Motor neuron (in vitro differentiated cells): ENCODE measurements at regions of chr6 and their contacts with region 1.

Region 1: GRCh38 chr6:88982720-88983119 is 19.3 kb upstream of the RNGTT start:
- ATAC-seq: peak; percentile 59 to 97 (median 82)
- H3K4me3 ChIP-seq: no peak overlapping the region
- H3K27ac ChIP-seq: no peak overlapping the region
- H3K4me1 ChIP-seq: no peaks in the 10 kb centered on the region

Region 2: GRCh38 chr6:89080542-89081422 is 98.1 kb after region 1 on chr6 and contains the start of gene PNRC1:
- in situ Hi-C with region 1: loop called in 3 of 9 experiments (anchors 10 to 25 kb)
- ATAC-seq: peak; percentile 58 to 83 (median 76)
- H3K4me3 ChIP-seq: peak within 1 kb of the TSS; percentile 67 to 92 (median 81)
- H3K27ac ChIP-seq: peak within 1 kb of the TSS; percentile 79 to 90
- H3K4me1 ChIP-seq: peaks cover 8 to 12% of the 10 kb centered on the region in 2 donors
- total RNA-seq, gene PNRC1: 39.4 to 201 (median 62.8) TPM

Region 3: DNA sequence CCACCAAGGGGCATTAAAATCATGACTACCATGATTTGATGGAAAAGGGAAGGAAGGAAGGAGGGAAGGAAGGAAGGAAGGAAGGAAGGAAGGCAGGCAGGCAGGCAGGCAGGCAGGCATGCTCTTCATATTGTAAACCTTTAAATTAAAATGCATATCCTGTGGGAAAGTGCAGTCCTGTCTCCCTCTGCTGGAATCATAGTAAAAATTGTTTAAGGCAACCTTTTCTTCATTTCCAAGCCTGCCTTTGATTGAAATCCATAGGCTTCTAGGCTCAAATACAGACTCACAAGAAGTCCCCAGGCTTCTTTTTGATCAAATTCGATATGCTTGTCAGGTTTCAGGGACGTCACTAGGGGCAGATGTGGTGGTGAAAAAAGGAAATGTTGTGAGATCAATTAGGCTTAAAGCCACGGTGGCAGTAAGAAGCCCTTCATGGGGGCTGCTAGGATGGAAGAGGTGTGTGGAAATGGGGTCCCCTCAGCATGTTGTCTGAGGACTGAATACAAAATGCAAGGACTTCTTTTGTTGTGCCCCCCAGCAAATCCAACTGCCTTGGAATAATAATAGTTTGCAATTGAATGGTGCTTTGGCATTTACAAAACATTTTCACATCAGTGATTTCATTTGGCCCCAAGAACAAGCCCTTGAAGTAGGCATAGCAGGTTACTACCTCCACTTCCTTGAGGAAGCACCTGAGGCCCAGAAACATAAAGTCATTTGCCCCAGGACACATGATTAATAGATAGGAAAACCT is 260.0 kb after region 1 on chr6:
- in situ Hi-C with region 1: loop called in 4 of 9 experiments (anchors 10 to 25 kb)
- ATAC-seq: peak; percentile 61 to 89 (median 70)
- H3K4me3 ChIP-seq: no peak overlapping the region
- H3K27ac ChIP-seq: no peak overlapping the region
- H3K4me1 ChIP-seq: peaks cover 9 to 12% of the 10 kb centered on the region in 2 donors

Region 4: GRCh38 chr6:89260832-89261231 is 278.1 kb after region 1 on chr6:
- in situ Hi-C with region 1: loop called in 1 of 9 experiments (anchors 25 kb)
- ATAC-seq: peak in 4 of 8 experiments; percentile 29 to 67 (median 53)
- H3K4me3 ChIP-seq: no peak overlapping the region
- H3K27ac ChIP-seq: no peak overlapping the region
- H3K4me1 ChIP-seq: peaks cover 0 to 4% of the 10 kb centered on the region in 2 donors

Region 5: GRCh38 chr6:89371849-89372505 is 389.3 kb after region 1 on chr6:
- in situ Hi-C with region 1: loop called in 1 of 9 experiments (anchors 25 kb)
- ATAC-seq: peak; percentile 49 to 93 (median 67)
- H3K4me3 ChIP-seq: no peak overlapping the region
- H3K27ac ChIP-seq: no peak overlapping the region
- H3K4me1 ChIP-seq: peaks cover 12% of the 10 kb centered on the region in 2 donors